MCF 10A (cell line): ENCODE measurements at regions of chr19 and their contacts with region 1.

Region 1: GRCh38 chr19:52942386-52943133 is 19.3 kb upstream of the ZNF888 start:
- DNase-seq: peak; percentile 86
- H3K4me3 Mint-ChIP-seq: peak overlapping the region; percentile 80
- H3K27ac Mint-ChIP-seq: peak overlapping the region; percentile 80
- H3K4me1 Mint-ChIP-seq: peaks cover 11% of the 10 kb centered on the region
- H3K27me3 Mint-ChIP-seq: no peaks in the 10 kb centered on the region
- CTCF ChIP-seq: no peak

Region 2: DNA sequence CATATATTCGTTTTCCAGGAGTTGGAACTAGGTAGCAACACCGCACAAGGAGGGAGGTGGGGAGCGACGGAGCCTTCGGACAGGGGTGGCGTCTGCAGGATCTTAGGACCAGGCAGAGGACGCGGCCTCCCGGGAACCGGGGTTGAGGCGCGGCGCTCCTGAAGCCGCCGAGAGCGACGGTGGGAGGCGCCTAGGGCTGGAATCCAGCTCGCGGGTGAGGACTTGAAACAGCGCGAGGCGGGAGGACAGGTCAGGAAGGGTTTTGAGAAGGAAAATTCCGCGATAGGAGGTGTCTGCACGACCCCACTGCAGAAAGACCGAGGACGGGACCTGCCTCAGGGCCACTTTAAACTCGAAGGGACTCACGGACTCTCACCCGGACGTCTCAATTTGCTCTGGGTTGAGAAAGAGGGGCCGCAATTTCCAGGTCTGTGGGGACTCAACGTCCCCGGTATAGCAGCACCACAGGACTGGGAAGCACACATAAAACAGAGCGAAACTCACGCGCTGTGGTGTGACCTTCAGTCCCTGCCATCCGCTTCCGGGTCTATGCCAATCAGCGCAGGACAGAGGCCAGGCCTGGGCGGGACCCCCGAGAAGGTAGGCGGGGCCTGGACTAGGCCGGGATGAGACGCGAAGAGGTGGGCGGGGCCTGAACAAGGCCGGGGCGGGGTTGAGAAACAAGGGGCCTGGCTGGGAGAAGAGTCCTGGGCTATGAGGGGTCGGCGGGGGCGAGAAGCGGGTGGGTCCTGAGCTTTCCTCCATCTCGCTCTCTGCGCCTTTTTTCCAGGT is 45.2 kb before region 1 on chr19 and contains the start of gene ZNF320:
- CTCF ChIA-PET with region 1: no interaction called
- POLR2A ChIA-PET with region 1: no interaction called
- intact Hi-C with region 1: loop called (anchors 1 kb)
- DNase-seq: peak; percentile 87
- H3K4me3 Mint-ChIP-seq: peak within 1 kb of the TSS; percentile 75
- H3K27ac Mint-ChIP-seq: peak within 1 kb of the TSS; percentile 69
- H3K4me1 Mint-ChIP-seq: no peaks in the 10 kb centered on the region
- H3K27me3 Mint-ChIP-seq: no peaks in the 10 kb centered on the region
- CTCF ChIP-seq: no peak
- total RNA-seq, gene ZNF320: 4.9 and 5.4 TPM in 2 replicates

Region 3: DNA sequence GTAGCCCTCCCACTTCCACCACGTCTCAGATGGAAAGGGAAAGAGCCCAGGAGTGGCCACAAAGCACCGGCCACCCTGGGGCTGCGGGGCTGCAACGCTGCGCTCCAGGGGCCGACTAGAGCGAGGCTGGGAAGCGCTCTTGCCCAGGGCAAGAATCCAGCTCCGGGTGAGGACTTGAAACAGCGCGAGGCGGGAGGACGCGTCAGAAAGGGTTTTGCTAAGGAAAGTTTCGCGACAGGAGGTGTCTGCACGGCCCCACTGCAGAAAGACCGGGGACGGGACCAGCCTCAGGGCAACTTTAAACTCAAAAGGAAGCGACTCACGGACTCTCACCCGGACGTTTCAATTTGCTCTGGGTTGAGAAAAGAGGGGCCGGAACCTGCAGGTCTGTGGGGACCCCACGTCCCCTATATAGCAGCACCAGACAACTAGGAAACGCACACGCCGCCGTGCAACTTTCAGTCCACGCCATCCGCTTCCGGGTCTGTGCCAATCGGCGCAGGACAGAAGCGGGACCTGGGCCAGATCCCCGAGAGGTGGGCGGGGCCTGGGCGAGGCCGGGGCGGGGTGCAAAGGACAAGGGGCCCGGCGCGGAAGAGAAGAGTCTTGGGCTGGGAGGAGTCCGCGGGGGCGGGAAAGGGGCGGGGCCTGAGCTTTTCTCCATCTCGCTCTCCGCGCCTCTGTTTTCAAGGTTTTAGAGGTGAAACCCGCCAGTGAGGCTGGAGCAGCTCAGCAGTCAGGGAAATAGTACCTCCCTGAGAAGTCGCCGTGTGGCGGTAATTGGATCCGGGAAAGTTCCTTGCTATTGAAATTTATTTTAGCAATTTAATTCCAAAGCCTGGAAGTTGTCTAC is 20.1 kb after region 1 on chr19 and contains the start of gene ZNF816:
- CTCF ChIA-PET with region 1: no interaction called
- POLR2A ChIA-PET with region 1: interaction called, 7 read pairs
- intact Hi-C with region 1: loop called (anchors 2 kb)
- DNase-seq: peak; percentile 95
- H3K4me3 Mint-ChIP-seq: peak within 1 kb of the TSS; percentile 95
- H3K27ac Mint-ChIP-seq: peak within 1 kb of the TSS; percentile 87
- H3K4me1 Mint-ChIP-seq: no peaks in the 10 kb centered on the region
- H3K27me3 Mint-ChIP-seq: no peaks in the 10 kb centered on the region
- CTCF ChIP-seq: no peak
- total RNA-seq, gene ZNF816: 5.4 and 5.5 TPM in 2 replicates